ENCODE measurements at regions of chr9 and their contacts with region 1.

Region 1: GRCh38 chr9:87270221-87270847 is 227.3 kb upstream of the DAPK1 start:
- DNase-seq: no peak
- H3K4me3 ChIP-seq: no peak overlapping the region
- H3K27ac ChIP-seq: peak overlapping the region; percentile 47 to 79
- H3K4me1 ChIP-seq: peaks cover 4 to 34% of the 10 kb centered on the region in 2 donors
- H3K27me3 ChIP-seq: no peaks in the 10 kb centered on the region
- CTCF ChIP-seq: no peak

Region 2: GRCh38 chr9:87039809-87040392 is 230.4 kb before region 1 on chr9:
- intact Hi-C with region 1: loop called (anchors 5 kb)
- DNase-seq: no peak
- H3K4me3 ChIP-seq: no peak overlapping the region
- H3K27ac ChIP-seq: no peak overlapping the region
- H3K4me1 ChIP-seq: peaks cover 0 to 4% of the 10 kb centered on the region in 2 donors
- H3K27me3 ChIP-seq: no peaks in the 10 kb centered on the region
- CTCF ChIP-seq: no peak

Region 3: GRCh38 chr9:87179573-87180340 is 90.6 kb before region 1 on chr9:
- intact Hi-C with region 1: no loop called
- DNase-seq: no peak
- H3K4me3 ChIP-seq: no peak overlapping the region
- H3K27ac ChIP-seq: no peak overlapping the region
- H3K4me1 ChIP-seq: no peaks in the 10 kb centered on the region
- H3K27me3 ChIP-seq: no peaks in the 10 kb centered on the region
- CTCF ChIP-seq: no peak

Region 4: DNA sequence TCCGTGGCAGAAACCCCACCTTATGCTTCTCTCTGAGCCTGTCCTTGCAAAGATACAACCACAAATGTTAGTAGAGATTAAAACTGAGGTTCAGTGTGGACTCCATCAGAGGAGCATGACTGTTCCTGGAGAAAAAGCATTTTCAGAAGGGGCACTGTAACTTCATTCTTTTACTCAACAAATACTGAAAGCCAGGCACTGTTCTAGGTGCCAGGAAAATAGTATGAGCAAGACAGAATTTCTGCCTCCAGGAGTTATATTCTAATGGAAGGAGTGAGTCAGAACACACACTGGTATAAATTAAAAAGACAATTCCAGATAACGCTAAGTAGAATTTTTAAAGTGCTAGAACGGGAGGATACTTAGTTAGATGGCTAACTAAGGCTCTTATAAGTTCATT is 71.6 kb before region 1 on chr9:
- intact Hi-C with region 1: loop called (anchors 2 kb)
- DNase-seq: no peak
- H3K4me3 ChIP-seq: no peak overlapping the region
- H3K27ac ChIP-seq: peak overlapping the region in 1 of 2 donors; percentile 68
- H3K4me1 ChIP-seq: peaks cover 0 to 3% of the 10 kb centered on the region in 2 donors
- H3K27me3 ChIP-seq: no peaks in the 10 kb centered on the region
- CTCF ChIP-seq: no peak

Region 5: GRCh38 chr9:87223392-87224246 is 46.7 kb before region 1 on chr9:
- intact Hi-C with region 1: no loop called
- DNase-seq: no peak
- H3K4me3 ChIP-seq: no peak overlapping the region
- H3K27ac ChIP-seq: no peak overlapping the region
- H3K4me1 ChIP-seq: peaks cover 0 to 6% of the 10 kb centered on the region in 2 donors
- H3K27me3 ChIP-seq: no peaks in the 10 kb centered on the region
- CTCF ChIP-seq: no peak

Region 6: DNA sequence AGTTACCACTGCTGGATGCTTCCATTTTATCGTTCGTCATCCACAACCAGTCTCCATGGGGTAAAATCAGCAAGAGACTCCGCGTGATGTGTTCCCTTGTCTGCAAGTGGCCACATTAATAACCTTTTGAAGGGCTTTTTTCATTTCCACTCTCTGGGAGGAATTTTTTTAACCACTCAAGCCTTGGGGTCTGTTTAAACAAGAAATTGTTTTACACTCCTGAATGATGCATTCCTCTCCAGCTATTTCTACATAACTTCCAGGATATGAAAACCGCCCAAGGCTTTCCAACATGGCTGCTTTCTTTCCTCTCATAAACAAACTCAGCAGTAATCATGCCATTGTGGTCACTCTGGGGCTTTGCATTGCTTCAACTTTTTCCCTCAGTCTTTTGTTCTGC is 10.1 kb after region 1 on chr9:
- intact Hi-C with region 1: loop called (anchors 2 kb)
- DNase-seq: no peak
- H3K4me3 ChIP-seq: no peak overlapping the region
- H3K27ac ChIP-seq: no peak overlapping the region
- H3K4me1 ChIP-seq: peaks cover 0 to 13% of the 10 kb centered on the region in 2 donors
- H3K27me3 ChIP-seq: no peaks in the 10 kb centered on the region
- CTCF ChIP-seq: no peak